Astrocyte of the cerebellum (primary cell): ENCODE measurements at regions of chr12 and their contacts with region 1.

Region 1: GRCh38 chr12:12819671-12820311 is 6.6 kb downstream of the DDX47 start:
- DNase-seq: peak; percentile 93
- H3K4me3 ChIP-seq: no peak overlapping the region
- CTCF ChIP-seq: peak; percentile 13

Region 2: GRCh38 chr12:12736759-12737676 is 82.8 kb before region 1 on chr12:
- in situ Hi-C with region 1: no loop called
- DNase-seq: no peak
- H3K4me3 ChIP-seq: no peak overlapping the region
- CTCF ChIP-seq: peak; percentile 65

Region 3: DNA sequence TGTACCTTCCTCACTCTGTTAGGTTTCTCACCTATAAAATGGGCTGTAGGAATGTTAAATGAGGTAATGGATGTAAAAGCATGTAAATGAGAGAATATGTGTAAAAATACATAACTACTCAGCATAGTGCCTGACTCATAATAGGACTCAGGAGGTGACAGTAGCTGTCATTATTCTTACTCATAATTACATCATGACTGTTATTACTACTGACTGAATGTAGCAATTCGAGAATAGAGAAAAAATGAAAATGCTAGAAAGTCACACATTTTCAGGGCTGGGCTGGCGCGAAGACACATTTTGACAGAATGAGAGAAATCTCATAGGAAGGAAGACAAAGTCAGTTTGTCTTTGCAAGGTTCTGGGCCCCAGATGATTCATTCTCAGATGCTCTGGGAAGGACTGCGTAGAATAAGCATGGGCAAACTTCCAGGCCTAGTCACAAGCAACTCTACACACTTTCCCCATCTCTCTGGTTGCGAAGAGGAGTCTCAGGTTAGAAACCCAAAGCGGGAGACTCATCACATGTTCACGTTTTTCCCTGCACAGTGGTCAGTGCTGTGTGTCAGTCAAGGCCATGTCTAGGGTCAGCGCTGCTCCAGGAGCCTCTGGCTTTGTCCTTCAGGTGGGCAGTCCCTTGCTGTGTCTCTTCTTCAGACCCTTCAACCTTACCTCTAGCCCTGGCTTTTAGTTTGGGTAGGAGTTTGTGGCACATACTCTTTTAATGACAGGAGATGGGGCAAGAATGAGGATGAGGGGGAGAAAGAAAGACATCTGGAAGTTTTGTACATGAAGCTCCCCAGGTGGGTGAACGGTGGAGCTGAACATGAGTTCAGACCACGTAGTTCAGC is 80.0 kb after region 1 on chr12:
- in situ Hi-C with region 1: loop called (anchors 5 kb)
- DNase-seq: peak; percentile 79
- H3K4me3 ChIP-seq: no peak overlapping the region
- CTCF ChIP-seq: no peak